ENCODE measurements at regions of chr3 and their contacts with region 1.

Region 1: DNA sequence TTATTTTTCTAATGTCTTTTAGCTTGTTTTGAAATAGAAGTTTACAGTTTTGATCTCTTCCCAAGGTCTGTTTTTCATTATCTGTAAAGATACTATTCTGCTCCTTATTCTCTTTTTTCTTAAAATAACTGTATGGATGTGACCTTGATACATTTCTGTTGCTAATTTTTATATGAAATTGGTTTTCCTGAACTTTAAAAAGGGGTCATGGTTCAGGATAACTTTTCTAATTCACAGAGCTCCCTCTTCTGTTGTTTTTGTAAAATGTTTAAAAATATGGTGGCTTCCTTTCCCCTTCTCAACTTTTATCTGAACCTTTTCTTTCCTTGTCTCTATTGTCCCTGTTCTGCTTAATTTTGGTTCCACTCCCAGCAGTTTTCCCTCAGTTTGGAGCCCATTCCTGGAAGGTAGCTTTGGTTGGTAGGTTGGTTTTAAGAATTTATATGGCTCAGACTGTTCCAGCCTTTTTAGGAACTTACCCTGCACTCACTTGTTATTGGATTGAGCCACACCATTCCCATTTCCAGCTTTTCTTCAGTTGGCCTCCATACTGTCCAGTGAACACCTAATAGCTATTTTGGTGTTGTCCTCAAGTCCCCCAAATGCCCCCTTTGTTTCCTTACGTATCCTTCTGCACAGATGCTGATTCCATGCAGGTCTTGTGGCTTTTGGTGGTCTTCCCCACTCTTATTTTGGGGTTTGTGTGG is 70.3 kb downstream of the SLMAP start:
- DNase-seq: no peak
- ATAC-seq: no peak
- H3K4me3 Mint-ChIP-seq: no peak overlapping the region
- H3K27ac Mint-ChIP-seq: no peak overlapping the region
- H3K4me1 Mint-ChIP-seq: peaks cover 13% of the 10 kb centered on the region
- H3K27me3 Mint-ChIP-seq: no peaks in the 10 kb centered on the region
- CTCF ChIP-seq: no peak

Region 2: DNA sequence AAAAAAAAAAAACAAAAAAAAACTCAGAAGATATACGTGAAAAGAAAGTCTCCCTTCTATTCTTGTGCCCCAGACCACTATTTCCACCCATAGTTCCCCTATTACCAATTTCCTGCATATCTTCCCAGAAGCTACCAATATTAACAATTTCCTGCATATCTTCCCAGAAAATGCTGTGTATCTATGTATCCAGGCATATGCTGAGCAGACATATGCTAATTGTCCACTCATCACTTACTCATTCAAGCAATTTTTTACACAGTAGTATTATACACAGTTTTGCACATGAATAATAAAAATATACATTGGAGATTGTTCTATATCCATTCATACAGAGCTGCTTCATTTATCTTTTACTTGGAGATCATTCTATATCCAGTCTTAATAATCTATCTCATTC is 82.9 kb before region 1 on chr3:
- CTCF ChIA-PET with region 1: no interaction called
- POLR2A ChIA-PET with region 1: no interaction called
- intact Hi-C with region 1: no loop called
- DNase-seq: no peak
- ATAC-seq: no peak
- H3K4me3 Mint-ChIP-seq: no peak overlapping the region
- H3K27ac Mint-ChIP-seq: no peak overlapping the region
- H3K4me1 Mint-ChIP-seq: no peaks in the 10 kb centered on the region
- H3K27me3 Mint-ChIP-seq: no peaks in the 10 kb centered on the region
- CTCF ChIP-seq: no peak

Region 3: DNA sequence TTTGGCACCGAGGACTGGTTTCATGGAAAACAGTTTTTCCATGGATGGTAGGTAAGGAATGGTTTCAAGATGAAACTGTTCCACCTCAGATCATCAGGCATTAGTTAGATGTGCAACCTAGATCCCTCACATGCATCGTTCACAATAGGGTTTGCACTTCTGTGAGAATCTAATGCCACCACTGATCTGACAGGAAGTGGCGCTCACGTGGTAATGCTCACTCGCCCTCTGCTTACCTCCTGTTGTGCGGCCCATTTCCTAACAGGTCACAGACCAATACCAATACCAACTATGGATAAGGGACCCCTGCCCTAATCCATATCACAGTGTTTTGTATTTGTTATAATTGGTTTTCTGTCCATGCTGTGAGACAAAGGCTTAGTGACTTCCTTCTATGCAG is 11.4 kb before region 1 on chr3:
- CTCF ChIA-PET with region 1: interaction called, 10 read pairs
- POLR2A ChIA-PET with region 1: interaction called, 3 read pairs
- intact Hi-C with region 1: no loop called
- DNase-seq: peak; percentile 68
- ATAC-seq: peak; percentile 92
- H3K4me3 Mint-ChIP-seq: no peak overlapping the region
- H3K27ac Mint-ChIP-seq: peak overlapping the region; percentile 71
- H3K4me1 Mint-ChIP-seq: peaks cover 24% of the 10 kb centered on the region
- H3K27me3 Mint-ChIP-seq: no peaks in the 10 kb centered on the region
- CTCF ChIP-seq: no peak

Region 4: GRCh38 chr3:57910988-57911387 is 84.6 kb after region 1 on chr3:
- CTCF ChIA-PET with region 1: no interaction called
- POLR2A ChIA-PET with region 1: no interaction called
- intact Hi-C with region 1: no loop called
- DNase-seq: peak; percentile 53
- ATAC-seq: no peak
- H3K4me3 Mint-ChIP-seq: no peak overlapping the region
- H3K27ac Mint-ChIP-seq: no peak overlapping the region
- H3K4me1 Mint-ChIP-seq: no peaks in the 10 kb centered on the region
- H3K27me3 Mint-ChIP-seq: no peaks in the 10 kb centered on the region
- CTCF ChIP-seq: peak; percentile 39

Measured in activated CD8-positive, alpha-beta T cell treated with anti-CD3 and anti-CD28 coated beads for 36 hours (primary cell).